IMR-90 (cell line): ENCODE measurements at regions of chr20 and their contacts with region 1.

Region 1: DNA sequence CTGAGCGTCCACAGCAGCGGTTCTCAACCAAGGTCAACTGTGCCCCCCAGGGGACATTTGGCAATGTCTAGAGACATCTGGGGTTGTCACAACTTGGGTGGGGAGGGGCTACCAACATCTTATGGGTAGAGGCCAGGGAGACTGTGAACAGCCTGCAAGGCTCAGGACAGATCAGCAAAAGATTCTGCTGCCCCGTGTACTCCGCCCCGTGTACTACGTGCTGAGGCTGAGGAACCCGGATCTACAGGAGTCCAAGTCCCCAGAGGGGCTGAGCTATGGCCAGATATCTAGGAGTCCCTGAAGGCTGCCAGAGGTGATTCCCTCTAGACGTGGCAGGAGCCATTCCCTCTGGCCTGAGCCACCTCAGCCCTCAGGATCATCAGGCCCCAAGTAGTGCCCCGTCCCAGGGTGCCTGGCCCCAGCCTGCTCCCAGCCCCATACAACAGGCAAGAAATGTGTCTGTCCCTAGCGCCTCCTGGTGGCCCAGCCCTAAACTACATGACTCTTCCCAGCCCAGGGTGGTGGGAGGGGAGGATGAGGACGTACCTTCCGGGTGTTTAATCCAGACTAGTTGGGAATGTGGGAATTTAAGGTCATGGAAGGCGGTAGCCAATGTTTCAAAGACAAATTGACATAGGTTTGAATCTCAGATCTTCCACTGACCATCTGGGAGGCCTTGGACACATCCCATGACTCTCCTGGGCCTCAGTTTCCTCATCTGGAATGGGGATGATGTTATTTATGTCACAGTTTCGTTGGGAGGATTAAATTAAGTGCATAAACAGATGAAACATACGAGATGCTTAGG is 49.5 kb upstream of the PTPN1 start:
- DNase-seq: peak; percentile 75
- ATAC-seq: peak; percentile 91
- H3K4me3 ChIP-seq: no peak overlapping the region
- H3K27ac ChIP-seq: peak overlapping the region; percentile 4; the same call in 1 of the 2 replicates
- H3K4me1 ChIP-seq: peaks cover 13% of the 10 kb centered on the region
- H3K27me3 ChIP-seq: no peaks in the 10 kb centered on the region
- CTCF ChIP-seq: peak; percentile 91
- POLR2A ChIP-seq: peak; percentile 41; the same call in 1 of the 2 replicates
- RAD21 ChIP-seq: peak; percentile 96

Region 2: DNA sequence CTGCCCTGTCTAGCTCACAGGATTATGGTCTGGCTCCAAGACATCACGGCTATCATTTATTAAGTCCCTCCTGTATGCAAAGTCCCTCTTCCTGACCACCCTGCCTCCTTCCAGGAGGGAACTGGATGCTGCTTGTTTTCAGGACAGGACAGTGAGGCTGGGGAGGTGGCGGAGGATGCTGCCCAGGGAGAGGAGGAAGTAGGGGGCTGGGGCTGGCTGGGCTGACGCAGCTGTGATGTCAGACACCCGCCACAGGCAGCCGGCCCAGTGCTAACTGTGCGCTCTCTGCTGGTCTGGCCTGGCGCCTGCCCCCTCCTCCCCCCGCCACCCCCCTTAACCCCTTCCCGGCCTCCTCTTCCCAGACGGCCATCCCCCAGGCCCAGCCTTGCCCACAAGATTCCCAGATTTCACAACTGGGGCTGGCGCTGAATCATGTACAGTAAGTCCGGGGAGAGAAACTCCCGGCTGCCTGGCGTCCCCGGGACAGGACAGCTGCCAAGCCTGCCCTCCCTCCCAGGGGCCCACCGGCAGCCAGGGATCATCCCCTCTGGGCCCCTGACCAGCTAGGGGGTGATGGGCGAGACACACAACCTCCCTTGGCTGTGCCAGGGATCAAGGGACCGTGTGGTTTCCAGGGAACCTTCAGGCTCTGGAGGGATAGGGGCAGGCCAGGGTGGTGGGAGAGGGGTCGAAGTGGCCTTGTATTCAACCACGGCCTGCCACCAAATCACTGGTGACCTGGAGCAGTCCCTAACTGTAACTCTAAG is 152.0 kb before region 1 on chr20:
- CTCF ChIA-PET with region 1: no interaction called
- POLR2A ChIA-PET with region 1: no interaction called
- dilution Hi-C with region 1: no loop called
- in situ Hi-C with region 1: no loop called
- intact Hi-C with region 1: loop called (anchors 5 kb)
- DNase-seq: peak; percentile 100
- ATAC-seq: peak; percentile 59
- H3K4me3 ChIP-seq: peak overlapping the region; percentile 5; the same call in 1 of the 2 replicates
- H3K27ac ChIP-seq: peak overlapping the region; percentile 98
- H3K4me1 ChIP-seq: peaks cover 61% of the 10 kb centered on the region
- H3K27me3 ChIP-seq: no peaks in the 10 kb centered on the region
- CTCF ChIP-seq: peak; percentile 26; the same call in 1 of the 2 replicates
- POLR2A ChIP-seq: peak; percentile 74; the same call in 1 of the 2 replicates
- RAD21 ChIP-seq: peak; percentile 40

Region 3: GRCh38 chr20:50380641-50381040 is 80.0 kb before region 1 on chr20:
- CTCF ChIA-PET with region 1: no interaction called
- POLR2A ChIA-PET with region 1: no interaction called
- dilution Hi-C with region 1: no loop called
- in situ Hi-C with region 1: no loop called
- intact Hi-C with region 1: loop called (anchors 5 kb)
- DNase-seq: peak; percentile 65
- ATAC-seq: peak; percentile 60
- H3K4me3 ChIP-seq: no peak overlapping the region
- H3K27ac ChIP-seq: no peak overlapping the region
- H3K4me1 ChIP-seq: peaks cover 19% of the 10 kb centered on the region
- H3K27me3 ChIP-seq: no peaks in the 10 kb centered on the region
- CTCF ChIP-seq: peak; percentile 72
- POLR2A ChIP-seq: no peak
- RAD21 ChIP-seq: peak; percentile 73

Region 4: GRCh38 chr20:50399917-50400704 is 60.6 kb before region 1 on chr20:
- CTCF ChIA-PET with region 1: no interaction called
- POLR2A ChIA-PET with region 1: no interaction called
- dilution Hi-C with region 1: no loop called
- in situ Hi-C with region 1: no loop called
- intact Hi-C with region 1: loop called (anchors 5 kb)
- DNase-seq: peak; percentile 60
- ATAC-seq: peak; percentile 22; the same call in 1 of the 2 replicates
- H3K4me3 ChIP-seq: no peak overlapping the region
- H3K27ac ChIP-seq: no peak overlapping the region
- H3K4me1 ChIP-seq: peaks cover 27% of the 10 kb centered on the region
- H3K27me3 ChIP-seq: peaks cover 10% of the 10 kb centered on the region
- CTCF ChIP-seq: 0 out of 2 replicates have a peak, but pooled peaks have one; percentile 3
- POLR2A ChIP-seq: no peak
- RAD21 ChIP-seq: no peak

Region 5: DNA sequence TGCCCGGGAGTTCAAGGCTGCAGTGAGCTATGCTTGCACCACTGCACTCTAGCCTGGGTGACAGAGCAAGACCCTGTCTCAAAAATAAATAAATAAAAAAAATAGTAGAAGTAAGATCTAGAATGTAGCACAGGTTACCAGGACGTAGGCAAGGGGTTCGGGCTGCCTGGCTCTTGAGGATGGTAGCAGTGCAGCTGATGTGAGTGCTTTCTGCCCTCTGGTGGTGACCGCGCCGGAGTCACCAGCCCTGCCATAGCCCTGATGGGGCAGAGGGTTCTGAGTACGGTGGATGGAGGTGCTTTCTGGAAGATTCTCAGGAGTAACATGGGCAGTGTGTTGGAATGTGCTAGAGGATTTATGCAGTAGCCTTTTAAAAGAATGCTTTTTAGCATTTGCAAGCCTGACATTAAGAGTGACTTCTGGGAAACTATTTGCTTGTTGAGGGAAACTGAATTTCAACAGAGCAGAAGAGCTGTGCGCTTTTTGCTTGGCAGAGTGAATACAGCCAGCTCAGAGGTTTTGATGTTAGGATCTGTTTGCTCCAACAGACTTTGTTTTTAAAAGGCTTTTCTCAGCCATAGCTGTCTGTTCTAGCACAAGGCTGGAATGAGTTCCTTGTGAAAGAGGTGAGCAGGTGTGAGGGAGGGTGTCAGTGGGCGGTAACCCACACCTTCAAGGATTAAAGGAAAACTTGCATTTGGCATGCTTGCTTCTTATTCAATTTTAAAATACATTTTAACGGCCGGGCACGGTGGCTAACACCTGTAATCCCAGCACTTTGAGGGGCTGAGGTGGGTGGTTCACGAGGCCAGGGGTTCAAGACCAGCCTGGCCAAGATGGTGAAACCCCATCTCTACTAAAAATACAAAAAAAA is 115.4 kb after region 1 on chr20:
- CTCF ChIA-PET with region 1: no interaction called
- POLR2A ChIA-PET with region 1: no interaction called
- dilution Hi-C with region 1: no loop called
- in situ Hi-C with region 1: loop called (anchors 5 kb)
- intact Hi-C with region 1: loop called (anchors 1 kb)
- DNase-seq: peak; percentile 51
- ATAC-seq: peak; percentile 74
- H3K4me3 ChIP-seq: no peak overlapping the region
- H3K27ac ChIP-seq: no peak overlapping the region; the same call in 1 of the 2 replicates
- H3K4me1 ChIP-seq: peaks cover 11% of the 10 kb centered on the region
- H3K27me3 ChIP-seq: no peaks in the 10 kb centered on the region
- CTCF ChIP-seq: peak; percentile 68
- POLR2A ChIP-seq: no peak
- RAD21 ChIP-seq: peak; percentile 85

Region 6: DNA sequence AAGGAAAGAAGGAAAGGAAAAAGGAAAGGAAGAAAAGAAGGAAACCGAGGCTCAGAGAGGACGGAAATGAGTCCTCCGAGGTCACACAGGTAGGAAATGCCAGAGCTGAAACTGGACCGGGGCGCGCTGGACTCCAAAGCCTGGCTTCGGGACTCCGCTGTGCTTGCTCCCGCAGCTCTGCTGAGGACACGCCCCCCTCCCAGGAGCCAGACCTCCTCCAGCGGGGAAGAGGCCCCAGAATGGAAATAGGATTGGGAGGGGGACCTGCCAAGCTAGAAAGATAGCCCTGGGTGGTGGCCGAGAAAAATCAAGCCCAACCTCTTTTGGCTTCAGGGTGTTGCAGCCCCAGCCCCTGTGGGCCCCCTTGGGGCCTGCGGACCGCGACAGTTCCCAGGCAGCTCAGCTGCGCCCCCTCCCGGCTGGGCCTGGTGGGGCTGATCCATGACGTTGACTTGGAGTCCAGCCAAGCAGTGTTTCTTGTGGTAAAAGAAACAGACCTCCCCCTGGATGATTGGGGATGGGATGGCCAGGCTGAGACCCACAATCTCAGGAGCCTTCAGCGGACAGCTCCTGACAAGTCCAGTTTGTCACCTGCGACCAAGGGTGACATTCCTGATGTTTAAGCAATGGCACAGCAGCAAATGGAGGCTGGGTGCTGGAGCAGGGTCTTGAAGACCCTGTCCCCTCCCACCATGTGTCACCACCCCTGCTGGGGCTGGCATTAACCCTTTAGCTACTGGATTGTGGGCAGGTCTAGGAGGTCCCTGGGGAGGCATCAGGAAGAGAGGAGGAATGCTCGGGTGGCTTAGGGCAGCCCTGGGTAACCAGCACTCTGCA is 175.2 kb after region 1 on chr20:
- CTCF ChIA-PET with region 1: no interaction called
- POLR2A ChIA-PET with region 1: no interaction called
- dilution Hi-C with region 1: no loop called
- in situ Hi-C with region 1: no loop called
- intact Hi-C with region 1: no loop called
- DNase-seq: peak; percentile 49
- ATAC-seq: peak; percentile 57
- H3K4me3 ChIP-seq: peak overlapping the region; percentile 3; the same call in 1 of the 2 replicates
- H3K27ac ChIP-seq: peak overlapping the region; percentile 100
- H3K4me1 ChIP-seq: peaks cover 25% of the 10 kb centered on the region
- H3K27me3 ChIP-seq: no peaks in the 10 kb centered on the region
- CTCF ChIP-seq: peak; percentile 87
- POLR2A ChIP-seq: no peak
- RAD21 ChIP-seq: peak; percentile 57

Region 7: GRCh38 chr20:50670126-50670862 is 209.6 kb after region 1 on chr20:
- CTCF ChIA-PET with region 1: no interaction called
- POLR2A ChIA-PET with region 1: no interaction called
- dilution Hi-C with region 1: no loop called
- in situ Hi-C with region 1: no loop called
- intact Hi-C with region 1: no loop called
- DNase-seq: peak; percentile 31
- ATAC-seq: no peak
- H3K4me3 ChIP-seq: no peak overlapping the region
- H3K27ac ChIP-seq: no peak overlapping the region
- H3K4me1 ChIP-seq: peaks cover 6% of the 10 kb centered on the region; the same call in 1 of the 2 replicates
- H3K27me3 ChIP-seq: no peaks in the 10 kb centered on the region
- CTCF ChIP-seq: no peak
- POLR2A ChIP-seq: no peak
- RAD21 ChIP-seq: no peak